ENCODE measurements at regions of chr11 and their contacts with region 1.

Region 1: GRCh38 chr11:34454308-34455032 is 15.7 kb downstream of the CAT start:
- DNase-seq: no peak
- ATAC-seq: no peak

Region 2: DNA sequence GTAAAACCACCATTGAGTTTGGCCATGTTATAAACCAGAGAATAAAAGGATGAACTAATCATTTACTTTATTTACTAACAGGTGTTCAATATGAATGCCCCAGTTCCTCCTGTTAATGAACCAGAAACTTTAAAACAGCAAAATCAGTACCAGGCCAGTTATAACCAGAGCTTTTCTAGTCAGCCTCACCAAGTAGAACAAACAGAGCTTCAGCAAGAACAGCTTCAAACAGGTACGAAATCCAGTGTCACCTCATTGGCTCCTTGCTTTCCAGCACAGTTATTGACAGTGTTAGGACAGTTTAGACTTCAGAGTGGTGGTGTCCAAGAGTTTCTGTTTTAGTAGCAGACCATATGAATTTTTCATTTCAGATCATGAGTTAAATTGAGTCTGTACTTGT is 362.6 kb before region 1 on chr11:
- intact Hi-C with region 1: loop called in 1 of 2 experiments (anchors 10 kb)
- DNase-seq: no peak
- ATAC-seq: no peak

Region 3: DNA sequence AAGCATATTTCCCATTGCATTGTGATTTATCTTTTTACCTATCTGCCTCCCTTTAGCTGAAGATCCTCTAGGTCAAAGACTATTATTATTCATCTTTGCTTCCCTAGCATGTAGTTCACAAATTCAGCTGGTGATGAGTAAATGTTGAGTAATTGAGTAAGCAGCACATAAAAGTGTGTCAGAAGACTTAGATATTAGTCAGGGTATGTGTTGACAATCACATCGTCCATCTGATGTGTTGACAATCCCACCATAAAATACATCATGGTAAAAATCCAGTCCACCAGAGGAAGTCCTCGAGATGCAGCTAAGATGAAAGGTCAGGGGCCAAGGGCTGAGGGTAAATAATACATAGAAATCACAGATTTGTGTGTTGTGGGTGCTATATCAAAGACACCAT is 73.8 kb before region 1 on chr11:
- intact Hi-C with region 1: no loop called
- DNase-seq: no peak
- ATAC-seq: no peak

Region 4: DNA sequence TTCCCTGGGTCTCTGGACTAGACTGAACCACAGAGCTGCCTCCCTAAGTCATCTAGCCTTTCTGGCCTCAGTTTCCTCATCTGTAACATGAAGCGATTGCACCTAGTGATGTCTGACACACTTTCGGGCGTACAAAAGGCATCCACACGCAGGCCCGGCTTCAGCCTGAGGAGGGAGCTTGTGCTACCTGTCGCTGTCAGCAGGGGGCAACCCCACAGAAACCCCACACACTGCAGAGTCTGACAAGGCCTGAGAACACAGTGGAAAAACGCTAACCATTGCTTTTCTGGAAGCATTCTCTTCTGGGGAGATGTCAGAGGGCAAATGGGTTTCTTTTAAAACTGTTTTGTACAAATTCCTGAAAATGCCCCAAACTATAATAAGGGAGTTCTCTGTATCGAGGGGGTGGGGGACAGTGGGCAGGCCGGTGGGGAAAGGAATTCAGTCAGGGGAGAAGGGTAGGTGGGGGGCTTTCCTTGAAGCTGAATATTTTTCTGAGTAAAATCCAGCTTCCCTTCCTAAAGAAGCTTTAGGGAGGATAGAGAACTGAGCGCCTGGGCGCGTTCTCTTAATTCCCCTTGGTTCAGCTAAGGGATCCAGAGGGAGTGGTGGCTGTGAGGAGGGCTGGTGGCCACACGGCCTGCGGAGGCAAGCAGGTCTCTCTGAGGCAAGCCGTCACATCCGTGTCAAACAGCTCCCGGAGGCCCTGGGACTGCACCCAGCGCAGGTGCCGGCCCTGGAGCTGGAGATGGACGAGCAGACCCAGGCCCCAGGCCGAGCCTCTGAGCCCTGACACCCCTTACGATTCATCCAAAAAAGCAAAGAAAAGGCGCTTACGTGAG is 58.6 kb after region 1 on chr11:
- intact Hi-C with region 1: no loop called
- DNase-seq: peak; percentile 39 to 70
- ATAC-seq: peak; percentile 94

Measured in left colon (tissue), 2 donors.